Sciatic nerve (tissue), 2 donors: ENCODE measurements at regions of chr12 and their contacts with region 1.

Region 1: DNA sequence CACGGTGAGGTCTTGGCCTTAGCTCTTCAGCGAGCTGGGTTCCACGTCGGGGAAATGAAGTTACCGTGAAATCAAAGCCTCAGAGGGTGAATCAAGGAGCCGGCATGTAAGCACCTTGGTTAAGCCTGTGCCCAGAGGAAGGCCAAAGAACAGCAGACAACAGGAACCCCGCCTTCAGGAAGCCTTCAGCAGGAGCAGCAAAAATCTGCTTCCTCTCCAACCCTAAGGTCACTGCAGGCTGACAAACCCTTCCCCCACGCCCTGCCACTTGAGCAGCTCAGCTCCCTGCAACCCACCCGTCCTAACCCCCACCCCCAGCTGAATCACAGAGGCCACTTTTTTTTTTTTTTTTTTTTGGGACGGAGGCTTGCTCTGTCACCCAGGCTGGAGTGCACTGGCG is 72.9 kb upstream of the LTA4H start:
- DNase-seq: no peak
- ATAC-seq: peak; percentile 55

Region 2: DNA sequence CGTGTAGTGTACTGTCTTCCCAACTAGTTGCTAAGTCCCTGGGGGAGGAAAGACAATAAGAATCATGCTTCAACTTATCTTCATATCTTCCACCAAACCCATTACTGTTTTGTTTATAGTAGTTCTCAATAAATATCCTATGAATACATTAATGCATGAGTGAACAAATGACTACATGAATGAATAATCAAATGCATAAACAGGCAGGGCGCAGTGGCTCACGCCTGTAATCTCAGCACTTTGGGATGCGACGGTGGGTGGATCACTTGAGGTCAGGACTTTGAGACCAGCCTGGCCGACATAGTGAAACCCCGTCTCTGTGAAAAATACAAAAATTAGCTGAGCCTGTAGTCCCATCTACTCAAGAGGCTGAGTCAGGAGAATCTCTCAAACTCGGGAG is 1002.8 kb before region 1 on chr12:
- intact Hi-C with region 1: no loop called
- DNase-seq: no peak
- ATAC-seq: no peak

Region 3: GRCh38 chr12:97424911-97425310 is 1316.6 kb after region 1 on chr12:
- intact Hi-C with region 1: loop called (anchors 5 kb)
- DNase-seq: no peak
- ATAC-seq: no peak